Activated CD4-positive, alpha-beta memory T cell treated with anti-CD3 and anti-CD28 coated beads, Interleukin-2, amount 10 ng/mL, durations not matched to agents 7 days and 5 days (primary cell): ENCODE measurements at regions of chr16 and their contacts with region 1.

Region 1: GRCh38 chr16:67017810-67018488 is 11.0 kb upstream of the CBFB start:
- DNase-seq: peak; percentile 91
- H3K4me3 Mint-ChIP-seq: no peak overlapping the region
- H3K27ac Mint-ChIP-seq: peak overlapping the region; percentile 57
- H3K4me1 Mint-ChIP-seq: peaks cover 41% of the 10 kb centered on the region
- H3K27me3 Mint-ChIP-seq: no peaks in the 10 kb centered on the region

Region 2: GRCh38 chr16:66275775-66276428 is 742.0 kb before region 1 on chr16:
- CTCF ChIA-PET with region 1: no interaction called
- POLR2A ChIA-PET with region 1: no interaction called
- DNase-seq: peak; percentile 17
- H3K4me3 Mint-ChIP-seq: no peak overlapping the region
- H3K27ac Mint-ChIP-seq: no peak overlapping the region
- H3K4me1 Mint-ChIP-seq: peaks cover 3% of the 10 kb centered on the region
- H3K27me3 Mint-ChIP-seq: peaks cover 27% of the 10 kb centered on the region

Region 3: DNA sequence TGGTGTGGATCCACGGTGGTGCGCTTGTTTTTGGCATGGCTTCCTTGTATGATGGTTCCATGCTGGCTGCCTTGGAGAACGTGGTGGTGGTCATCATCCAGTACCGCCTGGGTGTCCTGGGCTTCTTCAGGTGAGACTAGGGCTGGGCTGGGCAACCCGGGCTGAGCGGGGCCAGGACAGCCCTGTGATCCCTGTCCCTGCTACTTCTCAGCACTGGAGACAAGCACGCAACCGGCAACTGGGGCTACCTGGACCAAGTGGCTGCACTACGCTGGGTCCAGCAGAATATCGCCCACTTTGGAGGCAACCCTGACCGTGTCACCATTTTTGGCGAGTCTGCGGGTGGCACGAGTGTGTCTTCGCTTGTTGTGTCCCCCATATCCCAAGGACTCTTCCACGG is 77.7 kb before region 1 on chr16:
- CTCF ChIA-PET with region 1: no interaction called
- POLR2A ChIA-PET with region 1: no interaction called
- DNase-seq: no peak
- H3K4me3 Mint-ChIP-seq: no peak overlapping the region
- H3K27ac Mint-ChIP-seq: no peak overlapping the region
- H3K4me1 Mint-ChIP-seq: peaks cover 23% of the 10 kb centered on the region
- H3K27me3 Mint-ChIP-seq: no peaks in the 10 kb centered on the region

Region 4: GRCh38 chr16:66983033-66983432 is 34.9 kb before region 1 on chr16:
- CTCF ChIA-PET with region 1: interaction called, 38 read pairs
- POLR2A ChIA-PET with region 1: interaction called, 81 read pairs
- DNase-seq: no peak
- H3K4me3 Mint-ChIP-seq: no peak overlapping the region
- H3K27ac Mint-ChIP-seq: peak overlapping the region; percentile 98
- H3K4me1 Mint-ChIP-seq: peaks cover 77% of the 10 kb centered on the region
- H3K27me3 Mint-ChIP-seq: no peaks in the 10 kb centered on the region

Region 5: DNA sequence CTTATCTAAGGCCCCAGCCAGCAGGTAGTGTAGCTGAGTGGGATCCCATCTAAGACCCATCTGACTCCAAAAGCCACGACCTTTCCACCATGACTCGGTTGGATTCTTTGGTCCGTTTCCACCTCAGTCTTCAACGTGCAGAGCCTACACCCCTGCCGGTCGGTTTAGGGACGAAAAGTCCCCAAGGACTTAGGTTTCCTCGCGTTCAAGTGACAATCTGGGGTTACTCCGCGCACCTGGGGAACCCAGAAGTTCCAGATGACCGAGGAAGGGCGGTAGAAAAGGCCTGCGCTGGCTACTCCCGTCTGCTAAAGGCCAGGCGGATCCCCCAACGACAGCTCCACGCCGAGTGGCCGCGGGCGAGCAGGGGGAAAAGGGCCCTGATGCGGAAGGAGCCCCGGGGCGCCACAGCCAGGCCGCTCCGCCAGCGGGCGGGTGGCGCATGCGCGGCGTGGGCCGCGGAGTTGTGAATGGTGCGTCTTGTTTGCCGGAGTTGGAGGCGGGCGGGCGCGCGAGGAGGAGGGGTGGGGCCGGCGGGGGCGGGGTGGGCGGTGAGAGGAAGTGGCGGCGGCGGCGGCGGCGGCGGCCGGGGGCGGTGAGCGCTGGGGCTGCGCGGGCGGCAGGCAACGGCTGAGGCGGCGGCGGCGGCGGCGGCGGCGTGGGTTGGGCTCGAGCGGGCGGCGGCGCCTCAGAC is 10.8 kb after region 1 on chr16 and contains the start of gene CBFB:
- CTCF ChIA-PET with region 1: interaction called, 88 read pairs
- POLR2A ChIA-PET with region 1: interaction called, 106 read pairs
- DNase-seq: peak; percentile 94
- H3K4me3 Mint-ChIP-seq: peak within 1 kb of the TSS; percentile 93
- H3K27ac Mint-ChIP-seq: peak within 1 kb of the TSS; percentile 92
- H3K4me1 Mint-ChIP-seq: peaks cover 61% of the 10 kb centered on the region
- H3K27me3 Mint-ChIP-seq: no peaks in the 10 kb centered on the region
- total RNA-seq, gene CBFB: 236 to 238 TPM

Region 6: DNA sequence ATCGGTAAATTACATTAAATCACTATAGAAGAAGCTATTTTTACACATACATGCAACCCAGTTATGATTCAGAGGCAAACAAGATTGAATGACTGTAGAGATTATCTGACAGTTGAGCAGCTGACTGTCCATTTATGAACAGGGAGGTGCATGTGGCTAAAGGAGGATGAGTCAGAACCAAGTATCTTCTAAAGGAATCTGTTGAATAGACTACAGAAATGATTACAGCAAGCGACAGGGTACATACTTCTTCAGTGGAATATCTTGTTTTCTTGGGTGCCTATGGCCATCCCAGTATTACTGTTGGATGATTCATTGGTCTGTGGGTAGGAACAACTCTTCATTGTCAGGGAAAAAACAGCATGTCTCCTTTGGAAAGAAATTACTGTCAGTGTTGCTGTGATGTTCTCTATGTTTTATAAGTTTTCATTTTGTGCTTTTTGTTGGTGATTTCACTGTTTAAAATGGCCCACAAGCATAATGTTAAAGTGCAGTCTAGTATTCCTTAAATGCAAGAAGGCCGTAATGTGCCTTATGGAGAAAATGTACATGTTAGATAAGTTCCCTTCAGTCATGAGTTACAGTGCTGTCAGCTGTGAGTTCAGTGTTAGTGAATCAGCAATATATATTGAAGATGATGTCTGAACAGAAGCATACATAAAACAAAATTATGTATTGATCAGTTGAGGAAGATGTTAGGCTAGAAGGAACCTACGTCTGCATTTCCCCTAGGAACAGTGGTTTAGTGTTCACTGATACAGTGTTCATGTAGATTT is 38.0 kb after region 1 on chr16:
- CTCF ChIA-PET with region 1: interaction called, 19 read pairs
- POLR2A ChIA-PET with region 1: interaction called, 4 read pairs
- DNase-seq: peak; percentile 30
- H3K4me3 Mint-ChIP-seq: peak overlapping the region; percentile 13
- H3K27ac Mint-ChIP-seq: peak overlapping the region; percentile 85
- H3K4me1 Mint-ChIP-seq: peaks cover 66% of the 10 kb centered on the region
- H3K27me3 Mint-ChIP-seq: no peaks in the 10 kb centered on the region

Region 7: GRCh38 chr16:67150833-67151396 is 133.0 kb after region 1 on chr16 and contains the start of gene B3GNT9:
- CTCF ChIA-PET with region 1: interaction called, 152 read pairs
- POLR2A ChIA-PET with region 1: interaction called, 28 read pairs
- DNase-seq: peak; percentile 69
- H3K4me3 Mint-ChIP-seq: peak within 1 kb of the TSS; percentile 73
- H3K27ac Mint-ChIP-seq: peak within 1 kb of the TSS; percentile 71
- H3K4me1 Mint-ChIP-seq: peaks cover 44% of the 10 kb centered on the region
- H3K27me3 Mint-ChIP-seq: no peaks in the 10 kb centered on the region
- total RNA-seq, gene B3GNT9: 14.6 to 16.2 TPM